OCI-LY7 (cell line): ENCODE measurements at regions of chr9 and their contacts with region 1.

Region 1: GRCh38 chr9:76576344-76576743 is 117.4 kb downstream of the GCNT1 start:
- DNase-seq: peak; percentile 80
- H3K4me3 ChIP-seq: no peak overlapping the region
- H3K27ac ChIP-seq: peak overlapping the region; percentile 71
- H3K4me1 ChIP-seq: peaks cover 65% of the 10 kb centered on the region
- CTCF ChIP-seq: no peak

Region 2: DNA sequence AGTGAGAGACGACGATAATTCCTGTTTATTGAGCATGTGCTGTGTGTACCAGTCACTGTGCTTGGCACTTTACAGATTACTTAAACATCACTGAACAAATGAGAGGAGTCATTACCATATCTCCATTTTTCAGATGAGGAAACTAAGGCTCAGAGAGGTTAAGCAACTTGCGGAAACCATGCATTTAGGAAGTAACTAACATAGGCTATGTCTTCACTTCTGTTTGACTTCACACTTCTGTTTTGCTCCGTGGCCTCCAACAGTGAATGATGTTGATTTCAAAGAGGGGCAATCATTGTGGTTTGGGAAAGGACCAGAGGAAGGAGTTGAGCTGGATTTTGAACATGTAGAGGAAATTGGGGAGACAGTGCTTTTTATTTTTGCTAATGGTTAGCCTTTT is 100.7 kb before region 1 on chr9:
- CTCF ChIA-PET with region 1: interaction called, 3 read pairs
- POLR2A ChIA-PET with region 1: interaction called, 23 read pairs
- intact Hi-C with region 1: no loop called
- DNase-seq: no peak
- H3K4me3 ChIP-seq: peak overlapping the region; percentile 12
- H3K27ac ChIP-seq: peak overlapping the region; percentile 95
- H3K4me1 ChIP-seq: peaks cover 62% of the 10 kb centered on the region
- CTCF ChIP-seq: no peak

Region 3: DNA sequence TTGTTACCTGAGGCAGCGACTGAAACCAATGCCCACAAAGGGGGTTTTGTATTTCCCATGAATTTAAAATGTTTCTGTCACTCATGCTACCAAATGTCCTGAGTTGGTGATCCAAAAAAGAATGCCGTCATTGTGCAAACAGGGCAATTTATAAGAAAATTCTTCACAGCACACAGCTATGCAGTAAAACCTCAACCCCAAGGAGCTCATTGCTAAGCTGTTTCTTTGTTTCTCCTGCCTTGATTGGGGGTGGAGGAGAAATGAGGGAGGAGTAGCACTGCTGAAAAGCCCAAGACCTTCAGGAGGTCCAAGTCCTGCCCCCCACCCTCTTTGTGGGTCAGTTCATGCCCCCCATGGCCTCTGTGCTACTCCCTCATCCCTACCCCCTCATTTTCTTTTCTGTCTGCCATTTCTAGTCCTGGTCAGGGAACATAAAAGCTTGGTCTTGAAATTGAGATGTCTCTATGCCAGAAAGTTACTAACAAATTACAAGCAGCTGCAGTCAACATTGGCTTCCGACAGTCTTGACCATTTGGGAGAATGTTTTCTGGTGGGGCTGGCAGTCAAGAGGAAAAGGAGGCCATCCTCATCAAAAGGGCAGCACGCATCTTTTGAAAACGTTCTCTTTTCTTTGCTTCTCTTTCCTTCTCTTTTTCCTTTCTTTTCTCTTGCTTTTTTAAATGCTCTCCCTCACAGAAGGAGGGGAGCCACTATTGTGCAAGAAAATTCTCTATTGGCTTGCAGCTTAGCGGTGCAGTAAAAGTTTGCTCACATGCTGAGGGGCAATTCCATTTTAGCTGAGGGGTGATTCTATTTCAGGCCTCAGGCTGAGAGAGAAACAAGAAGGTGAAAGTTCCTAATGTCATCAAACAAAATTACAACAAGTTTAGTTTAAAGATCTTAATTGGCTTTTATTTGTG is 16.0 kb after region 1 on chr9:
- CTCF ChIA-PET with region 1: interaction called, 5 read pairs
- POLR2A ChIA-PET with region 1: interaction called, 14 read pairs
- intact Hi-C with region 1: no loop called
- DNase-seq: no peak
- H3K4me3 ChIP-seq: no peak overlapping the region
- H3K27ac ChIP-seq: no peak overlapping the region
- H3K4me1 ChIP-seq: peaks cover 18% of the 10 kb centered on the region
- CTCF ChIP-seq: no peak

Region 4: GRCh38 chr9:76643399-76644117 is 67.2 kb after region 1 on chr9:
- CTCF ChIA-PET with region 1: no interaction called
- POLR2A ChIA-PET with region 1: interaction called, 9 read pairs
- intact Hi-C with region 1: loop called (anchors 5 kb)
- DNase-seq: peak; percentile 73
- H3K4me3 ChIP-seq: no peak overlapping the region
- H3K27ac ChIP-seq: peak overlapping the region; percentile 27
- H3K4me1 ChIP-seq: peaks cover 18% of the 10 kb centered on the region
- CTCF ChIP-seq: no peak